Caco-2 (cell line): ENCODE measurements at regions of chr7 and their contacts with region 1.

Region 1: DNA sequence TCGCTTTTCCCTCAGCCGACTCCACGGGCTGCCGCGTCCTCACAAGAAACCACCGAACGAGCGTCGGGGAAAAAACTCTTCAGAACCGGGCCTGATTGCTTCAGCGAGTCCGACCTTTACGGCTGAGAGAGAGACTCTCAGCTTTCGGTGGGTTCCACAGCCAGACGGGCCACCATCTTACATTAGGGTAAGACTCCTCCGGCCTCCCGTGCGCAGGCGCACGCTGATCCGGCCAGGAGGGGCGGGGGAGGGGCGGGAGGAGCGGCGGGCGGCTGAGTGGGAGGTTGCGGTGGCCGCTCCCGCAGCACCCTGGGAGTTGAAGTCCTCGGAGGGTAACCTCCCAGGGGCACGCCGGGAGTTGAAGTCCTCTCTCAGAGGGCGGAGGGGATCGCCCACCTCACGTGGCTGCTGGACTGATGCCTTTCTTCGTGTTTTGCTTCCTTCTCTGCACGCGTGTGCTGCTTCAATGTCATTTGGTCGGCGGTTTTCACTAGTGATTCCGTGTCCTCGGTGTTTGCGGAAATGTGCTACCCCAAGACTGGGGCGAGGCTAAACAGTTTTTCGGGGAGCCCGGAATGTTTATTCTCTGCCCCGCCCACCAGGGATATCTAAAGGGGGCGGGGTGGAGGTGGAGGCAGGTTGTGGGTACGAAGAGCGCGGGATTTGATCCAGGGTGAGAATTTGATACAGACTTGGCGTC is at the start of gene CNOT4:
- DNase-seq: peak; percentile 95 to 97
- H3K4me3 ChIP-seq: peak within 1 kb of the TSS; percentile 82
- H3K4me3 Mint-ChIP-seq: no peak within 1 kb of the TSS
- H3K27ac Mint-ChIP-seq: no peak within 1 kb of the TSS
- H3K4me1 ChIP-seq: peaks cover 8% of the 10 kb centered on the region
- H3K4me1 Mint-ChIP-seq: no peaks in the 10 kb centered on the region
- H3K27me3 ChIP-seq: no peaks in the 10 kb centered on the region
- H3K27me3 Mint-ChIP-seq: no peaks in the 10 kb centered on the region
- CTCF ChIP-seq: no peak
- total RNA-seq, gene CNOT4: 22.0 and 22.6 TPM in 2 replicates

Region 2: GRCh38 chr7:135274495-135275268 is 235.4 kb before region 1 on chr7:
- CTCF ChIA-PET with region 1: no interaction called
- POLR2A ChIA-PET with region 1: no interaction called
- intact Hi-C with region 1: loop called (anchors 2 kb)
- DNase-seq: peak; percentile 56 to 78
- H3K4me3 ChIP-seq: no peak overlapping the region
- H3K4me3 Mint-ChIP-seq: no peak overlapping the region
- H3K27ac Mint-ChIP-seq: no peak overlapping the region
- H3K4me1 ChIP-seq: no peaks in the 10 kb centered on the region
- H3K4me1 Mint-ChIP-seq: no peaks in the 10 kb centered on the region
- H3K27me3 ChIP-seq: no peaks in the 10 kb centered on the region
- H3K27me3 Mint-ChIP-seq: no peaks in the 10 kb centered on the region
- CTCF ChIP-seq: peak; percentile 65 to 92

Region 3: GRCh38 chr7:135335628-135336139 is 174.4 kb before region 1 on chr7:
- CTCF ChIA-PET with region 1: no interaction called
- POLR2A ChIA-PET with region 1: no interaction called
- intact Hi-C with region 1: no loop called
- DNase-seq: peak; percentile 93 to 94
- H3K4me3 ChIP-seq: no peak overlapping the region
- H3K4me3 Mint-ChIP-seq: no peak overlapping the region
- H3K27ac Mint-ChIP-seq: no peak overlapping the region
- H3K4me1 ChIP-seq: peaks cover 5% of the 10 kb centered on the region; the same call in 1 of the 2 replicates
- H3K4me1 Mint-ChIP-seq: peaks cover 7% of the 10 kb centered on the region
- H3K27me3 ChIP-seq: no peaks in the 10 kb centered on the region
- H3K27me3 Mint-ChIP-seq: peaks cover 8% of the 10 kb centered on the region
- CTCF ChIP-seq: peak; percentile 70 to 82

Region 4: GRCh38 chr7:135414850-135415439 is 95.1 kb before region 1 on chr7:
- CTCF ChIA-PET with region 1: no interaction called
- POLR2A ChIA-PET with region 1: no interaction called
- intact Hi-C with region 1: loop called (anchors 2 kb)
- DNase-seq: peak; percentile 70 to 72
- H3K4me3 ChIP-seq: no peak overlapping the region
- H3K4me3 Mint-ChIP-seq: no peak overlapping the region
- H3K27ac Mint-ChIP-seq: no peak overlapping the region
- H3K4me1 ChIP-seq: no peaks in the 10 kb centered on the region
- H3K4me1 Mint-ChIP-seq: no peaks in the 10 kb centered on the region
- H3K27me3 ChIP-seq: no peaks in the 10 kb centered on the region
- H3K27me3 Mint-ChIP-seq: no peaks in the 10 kb centered on the region
- CTCF ChIP-seq: peak; percentile 79 to 81

Region 5: DNA sequence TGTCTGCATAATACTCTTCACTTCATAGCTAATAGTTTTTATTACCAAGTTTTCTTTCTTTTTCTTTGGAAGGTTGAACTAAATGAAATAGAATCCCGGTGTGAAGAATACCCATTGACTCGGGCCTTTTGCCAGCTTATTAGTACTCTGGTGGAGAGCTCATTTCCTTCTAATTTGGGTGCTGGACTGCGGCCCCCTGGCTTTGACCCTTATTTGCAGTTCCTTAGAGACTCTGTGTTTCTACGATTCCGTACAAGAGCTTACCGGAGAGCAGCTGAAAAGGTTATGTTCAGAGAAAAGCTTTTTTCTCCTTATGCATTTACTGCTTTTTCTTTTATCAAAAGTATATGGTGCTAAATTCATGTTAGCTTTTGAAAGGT is 87.9 kb after region 1 on chr7:
- CTCF ChIA-PET with region 1: no interaction called
- POLR2A ChIA-PET with region 1: no interaction called
- intact Hi-C with region 1: loop called (anchors 5 kb)
- DNase-seq: no peak
- H3K4me3 ChIP-seq: no peak overlapping the region
- H3K4me3 Mint-ChIP-seq: no peak overlapping the region
- H3K27ac Mint-ChIP-seq: no peak overlapping the region
- H3K4me1 ChIP-seq: peaks cover 9% of the 10 kb centered on the region
- H3K4me1 Mint-ChIP-seq: peaks cover 19% of the 10 kb centered on the region
- H3K27me3 ChIP-seq: no peaks in the 10 kb centered on the region
- H3K27me3 Mint-ChIP-seq: no peaks in the 10 kb centered on the region
- CTCF ChIP-seq: no peak

Region 6: GRCh38 chr7:135662373-135663114 is 152.5 kb after region 1 on chr7 and contains the start of gene STMP1:
- CTCF ChIA-PET with region 1: no interaction called
- POLR2A ChIA-PET with region 1: no interaction called
- intact Hi-C with region 1: loop called (anchors 5 kb)
- DNase-seq: peak; percentile 96 to 98
- H3K4me3 ChIP-seq: peak within 1 kb of the TSS; percentile 100
- H3K4me3 Mint-ChIP-seq: peak within 1 kb of the TSS; percentile 85
- H3K27ac Mint-ChIP-seq: peak within 1 kb of the TSS; percentile 87
- H3K4me1 ChIP-seq: peaks cover 11% of the 10 kb centered on the region
- H3K4me1 Mint-ChIP-seq: peaks cover 8% of the 10 kb centered on the region
- H3K27me3 ChIP-seq: no peaks in the 10 kb centered on the region
- H3K27me3 Mint-ChIP-seq: no peaks in the 10 kb centered on the region
- CTCF ChIP-seq: peak; percentile 69 to 78
- total RNA-seq, gene STMP1: 19.6 and 21.5 TPM in 2 replicates

Region 7: DNA sequence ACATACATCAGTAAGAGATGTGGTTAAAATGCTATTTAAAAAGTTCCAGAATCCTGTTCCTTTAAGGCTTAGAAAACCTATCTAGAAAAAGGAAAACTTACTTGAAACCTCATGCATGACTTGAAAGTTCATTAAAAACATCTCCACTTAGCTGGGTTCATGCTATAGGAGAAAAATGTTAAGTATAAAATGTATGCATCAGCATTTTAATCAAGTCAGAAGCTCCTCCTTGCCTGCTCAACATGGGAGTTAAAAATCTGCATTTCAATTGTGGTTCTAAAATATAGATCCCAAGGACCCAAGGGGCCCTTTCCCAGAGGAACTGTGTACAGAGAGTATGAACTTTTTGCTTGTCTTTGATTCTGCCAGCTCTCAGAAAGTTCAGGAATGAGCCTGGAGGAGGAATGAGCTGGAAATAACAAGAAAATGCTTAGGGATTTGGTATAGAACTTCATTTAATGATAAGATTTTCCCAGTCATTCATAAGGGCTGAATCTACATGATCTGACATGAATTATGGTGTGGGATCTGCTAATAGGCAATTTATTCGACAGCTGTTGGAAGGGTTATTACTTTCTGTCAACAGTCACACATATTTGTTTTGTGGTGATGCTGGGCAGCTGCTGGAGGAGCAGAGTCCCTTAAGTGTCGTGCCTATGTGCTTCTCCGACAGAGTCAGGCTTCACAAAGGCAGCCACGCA is 552.7 kb after region 1 on chr7:
- CTCF ChIA-PET with region 1: no interaction called
- POLR2A ChIA-PET with region 1: no interaction called
- intact Hi-C with region 1: no loop called
- DNase-seq: no peak
- H3K4me3 ChIP-seq: no peak overlapping the region
- H3K4me3 Mint-ChIP-seq: no peak overlapping the region
- H3K27ac Mint-ChIP-seq: no peak overlapping the region
- H3K4me1 ChIP-seq: no peaks in the 10 kb centered on the region
- H3K4me1 Mint-ChIP-seq: peaks cover 7% of the 10 kb centered on the region
- H3K27me3 ChIP-seq: no peaks in the 10 kb centered on the region
- H3K27me3 Mint-ChIP-seq: peaks cover 11% of the 10 kb centered on the region
- CTCF ChIP-seq: no peak